ENCODE measurements at regions of chr1 and their contacts with region 1.

Region 1: GRCh38 chr1:159780583-159781582 is at the start of gene DUSP23:
- DNase-seq: peak; percentile 99 to 100

Region 2: GRCh38 chr1:159891275-159892157 is 110.6 kb after region 1 on chr1:
- in situ Hi-C with region 1: loop called (anchors 25 kb)
- DNase-seq: peak; percentile 63 to 94

Region 3: DNA sequence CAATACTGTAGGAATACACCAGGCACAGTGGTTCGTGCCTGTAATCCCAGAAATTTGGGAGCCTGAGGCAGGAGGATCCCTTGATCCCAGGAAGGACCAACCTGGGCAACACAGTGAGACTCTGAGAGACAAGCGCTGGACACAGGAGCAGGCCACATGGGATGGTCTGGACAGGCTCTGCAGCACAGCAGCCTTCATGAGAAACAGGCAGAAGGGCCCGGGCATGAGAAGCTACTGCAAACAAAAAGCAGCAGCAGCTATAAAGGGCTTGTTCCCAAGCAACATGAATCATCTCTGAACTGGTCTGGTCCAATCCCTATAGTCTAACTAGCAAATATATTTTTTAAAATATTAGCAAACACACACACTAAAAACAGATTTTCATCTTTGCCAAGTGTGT is 208.7 kb after region 1 on chr1:
- in situ Hi-C with region 1: no loop called
- DNase-seq: no peak

Region 4: GRCh38 chr1:160400223-160400645 is 619.4 kb after region 1 on chr1 and contains the start of gene VANGL2:
- in situ Hi-C with region 1: no loop called
- DNase-seq: peak in 1 of 2 experiments; percentile 34